Tibial artery (tissue), 4 donors: ENCODE measurements at regions of chr4 and their contacts with region 1.

Region 1: DNA sequence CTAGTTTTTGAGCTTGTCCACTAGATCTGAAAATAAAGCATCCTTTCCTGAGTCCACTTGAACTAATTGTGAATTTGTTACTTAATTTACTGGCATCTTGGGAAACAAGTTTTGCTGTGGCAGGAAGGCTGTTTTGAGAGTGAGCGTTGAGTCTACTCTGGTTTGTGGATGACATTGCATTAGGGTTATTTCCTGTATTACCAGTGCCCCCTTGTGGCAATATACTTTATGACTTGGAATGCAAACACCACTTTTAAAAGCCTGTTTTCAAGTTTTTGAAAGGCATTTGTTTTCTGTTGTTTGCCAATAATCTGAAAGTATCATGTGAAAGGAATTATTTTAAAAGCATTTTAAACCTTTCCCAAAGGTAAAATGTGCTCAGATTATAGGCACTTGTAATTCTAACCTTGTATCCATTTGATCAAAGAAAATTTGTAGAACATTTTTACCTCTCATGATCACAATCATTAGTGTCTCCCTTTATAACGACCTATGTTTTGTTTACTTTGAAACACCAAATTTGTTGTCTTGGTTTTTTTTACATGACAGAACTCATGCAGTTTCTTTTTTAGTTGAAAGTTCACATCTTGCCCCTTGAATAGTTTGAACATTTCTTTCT is 18.0 kb upstream of the CYP2U1 start:
- DNase-seq: peak in 1 of 2 donors; percentile 27
- H3K4me3 ChIP-seq: no peak overlapping the region
- H3K27ac ChIP-seq: no peak overlapping the region
- H3K4me1 ChIP-seq: peaks cover 0 to 3% (median 0%) of the 10 kb centered on the region in 4 donors
- H3K27me3 ChIP-seq: no peaks in the 10 kb centered on the region
- CTCF ChIP-seq: peak; percentile 73 to 91

Region 2: GRCh38 chr4:107564326-107564725 is 349.1 kb before region 1 on chr4:
- intact Hi-C with region 1: no loop called
- DNase-seq: no peak
- H3K4me3 ChIP-seq: no peak overlapping the region
- H3K27ac ChIP-seq: no peak overlapping the region
- H3K4me1 ChIP-seq: no peaks in the 10 kb centered on the region
- H3K27me3 ChIP-seq: no peaks in the 10 kb centered on the region
- CTCF ChIP-seq: no peak

Region 3: GRCh38 chr4:107757864-107758476 is 155.4 kb before region 1 on chr4:
- intact Hi-C with region 1: loop called (anchors 1 kb)
- DNase-seq: no peak
- H3K4me3 ChIP-seq: no peak overlapping the region
- H3K27ac ChIP-seq: no peak overlapping the region
- H3K4me1 ChIP-seq: no peaks in the 10 kb centered on the region
- H3K27me3 ChIP-seq: no peaks in the 10 kb centered on the region
- CTCF ChIP-seq: peak; percentile 58 to 62